Mammary epithelial cell (primary cell): ENCODE measurements at regions of chr1 and their contacts with region 1.

Region 1: DNA sequence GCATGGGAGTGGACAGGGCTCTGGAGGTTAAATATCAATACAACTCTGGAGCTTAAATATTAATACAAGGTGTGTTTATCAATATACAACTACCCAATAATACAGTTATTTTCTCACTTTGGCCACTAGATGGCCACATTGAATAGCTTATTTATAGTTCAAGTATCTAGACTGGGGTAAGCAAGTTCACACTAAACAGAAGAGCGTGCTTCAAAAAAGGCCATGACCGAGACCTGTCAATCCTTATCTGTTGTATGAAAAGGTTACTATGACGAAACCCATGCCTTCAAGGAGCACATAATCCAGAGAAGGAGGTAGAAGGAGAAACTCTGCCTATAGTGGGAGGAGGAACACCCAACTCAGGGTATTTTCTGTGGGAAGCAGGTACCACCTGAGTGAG is 29.1 kb downstream of the CHML start:
- DNase-seq: peak; percentile 80
- H3K4me3 ChIP-seq: no peak overlapping the region
- H3K27ac ChIP-seq: peak overlapping the region; percentile 99
- H3K4me1 ChIP-seq: peaks cover 64% of the 10 kb centered on the region
- H3K27me3 ChIP-seq: no peaks in the 10 kb centered on the region
- CTCF ChIP-seq: peak; percentile 52 to 58

Region 2: GRCh38 chr1:241531195-241532161 is 79.6 kb before region 1 on chr1:
- CTCF ChIA-PET with region 1: interaction called, 6 read pairs
- dilution Hi-C with region 1: no loop called
- in situ Hi-C with region 1: loop called in 1 of 2 experiments (anchors 10 kb)
- intact Hi-C with region 1: loop called (anchors 1 kb)
- DNase-seq: peak; percentile 74
- H3K4me3 ChIP-seq: peak overlapping the region; percentile 44 to 82 (median 53)
- H3K27ac ChIP-seq: peak overlapping the region; percentile 92
- H3K4me1 ChIP-seq: peaks cover 15% of the 10 kb centered on the region
- H3K27me3 ChIP-seq: no peaks in the 10 kb centered on the region
- CTCF ChIP-seq: peak; percentile 54 to 55

Region 3: GRCh38 chr1:241592273-241592958 is 18.6 kb before region 1 on chr1:
- CTCF ChIA-PET with region 1: no interaction called
- dilution Hi-C with region 1: no loop called
- in situ Hi-C with region 1: no loop called
- intact Hi-C with region 1: loop called (anchors 1 kb)
- DNase-seq: peak; percentile 99
- H3K4me3 ChIP-seq: no peak overlapping the region
- H3K27ac ChIP-seq: peak overlapping the region; percentile 97
- H3K4me1 ChIP-seq: peaks cover 45% of the 10 kb centered on the region
- H3K27me3 ChIP-seq: no peaks in the 10 kb centered on the region
- CTCF ChIP-seq: no peak

Region 4: GRCh38 chr1:241834733-241835377 is 223.8 kb after region 1 on chr1:
- CTCF ChIA-PET with region 1: interaction called, 9 read pairs
- dilution Hi-C with region 1: no loop called
- in situ Hi-C with region 1: loop called in 1 of 2 experiments (anchors 5 kb)
- intact Hi-C with region 1: loop called (anchors 1 kb)
- DNase-seq: no peak
- H3K4me3 ChIP-seq: no peak overlapping the region
- H3K27ac ChIP-seq: no peak overlapping the region
- H3K4me1 ChIP-seq: peaks cover 11% of the 10 kb centered on the region
- H3K27me3 ChIP-seq: no peaks in the 10 kb centered on the region
- CTCF ChIP-seq: peak; percentile 76 to 82

Region 5: GRCh38 chr1:241895013-241895412 is 283.9 kb after region 1 on chr1:
- CTCF ChIA-PET with region 1: interaction called, 5 read pairs
- dilution Hi-C with region 1: no loop called
- in situ Hi-C with region 1: no loop called
- intact Hi-C with region 1: loop called (anchors 2 kb)
- DNase-seq: peak; percentile 42
- H3K4me3 ChIP-seq: no peak overlapping the region
- H3K27ac ChIP-seq: no peak overlapping the region
- H3K4me1 ChIP-seq: no peaks in the 10 kb centered on the region
- H3K27me3 ChIP-seq: no peaks in the 10 kb centered on the region
- CTCF ChIP-seq: no peak